ENCODE measurements at regions of chr17 and their contacts with region 1.

Region 1: DNA sequence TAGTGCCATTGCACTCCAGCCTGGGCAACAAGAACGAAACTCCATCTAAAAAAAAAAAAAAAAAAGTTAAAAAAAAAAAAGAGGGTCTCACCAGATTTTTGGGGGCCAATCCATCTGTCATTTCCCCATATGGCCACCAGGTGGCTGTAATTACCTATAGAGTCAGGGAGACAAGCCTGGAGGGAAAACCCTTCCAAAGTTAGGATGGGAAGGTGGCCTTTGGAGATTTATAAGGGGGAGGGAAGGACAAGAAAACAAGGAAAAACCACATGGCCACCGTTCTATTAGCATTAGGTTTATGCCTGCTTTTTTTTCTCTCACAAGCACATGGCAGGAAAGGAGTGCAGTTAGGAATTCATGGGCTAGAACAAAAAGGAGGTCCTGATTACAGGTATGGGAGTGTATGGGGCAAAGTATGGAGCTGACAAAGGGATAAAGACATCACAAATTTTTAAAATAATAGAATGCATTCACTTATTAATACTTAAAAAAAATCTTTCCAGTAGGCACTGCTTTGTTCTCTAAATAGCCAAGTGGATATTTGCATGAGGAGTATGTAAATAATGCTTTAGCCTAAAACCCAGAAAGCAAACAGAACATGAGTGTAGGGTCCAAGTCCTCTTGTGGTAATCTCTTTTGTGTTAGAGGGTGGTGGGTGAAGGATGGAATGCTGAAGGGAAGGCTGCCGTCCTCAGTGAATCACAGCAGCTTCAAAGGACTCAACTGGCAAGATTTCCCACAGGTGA is 5.1 kb downstream of the CYB5D1 start:
- DNase-seq: peak; percentile 42
- ATAC-seq: no peak

Region 2: GRCh38 chr17:7897773-7898172 is 34.9 kb after region 1 on chr17:
- intact Hi-C with region 1: loop called in 1 of 2 experiments (anchors 2 kb)
- DNase-seq: no peak
- ATAC-seq: peak; percentile 77 to 86